PC-3 (cell line): ENCODE measurements at regions of chr17 and their contacts with region 1.

Region 1: DNA sequence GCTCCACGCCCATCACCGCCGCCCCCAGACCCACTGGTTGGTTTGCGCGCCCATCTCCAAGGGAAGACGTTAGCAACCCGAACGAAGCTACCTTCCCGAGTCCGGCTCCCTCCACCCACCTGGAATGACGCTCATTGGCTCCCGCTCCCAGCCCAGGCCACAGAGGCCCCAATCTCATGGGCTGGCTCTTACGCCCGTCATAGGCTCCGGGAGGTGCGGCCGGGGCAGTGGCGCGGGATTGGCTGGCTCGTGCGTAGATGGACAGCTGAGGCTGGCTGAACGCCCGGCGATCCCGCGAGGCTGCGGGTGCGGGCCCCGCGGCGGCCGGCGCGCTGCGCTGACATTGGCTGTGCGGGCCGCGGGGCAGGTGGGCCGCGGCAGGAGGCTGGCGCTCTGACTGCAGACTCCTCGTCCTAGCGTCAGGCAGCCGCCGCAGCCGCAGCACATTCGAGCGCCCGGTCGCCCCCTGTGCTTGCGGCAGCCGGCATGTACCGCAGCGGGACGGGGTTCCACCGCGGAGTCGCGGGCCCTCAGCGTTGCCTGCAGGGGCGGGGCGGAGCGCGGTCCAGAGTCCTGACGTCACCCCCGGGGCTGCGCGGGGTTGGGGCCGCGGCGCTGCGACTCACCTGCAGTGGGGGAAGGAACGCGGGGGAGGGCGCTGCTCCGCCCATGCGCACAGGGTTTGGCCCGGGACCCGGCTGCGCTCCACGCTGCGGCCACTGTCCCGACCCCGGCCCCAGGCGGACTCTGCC is 453 bp upstream of the MYH10 start:
- DNase-seq: peak; percentile 97
- ATAC-seq: peak; percentile 96
- H3K4me3 ChIP-seq: peak overlapping the region; percentile 91
- H3K27ac ChIP-seq: peak overlapping the region; percentile 54
- H3K4me1 ChIP-seq: peaks cover 11% of the 10 kb centered on the region
- H3K27me3 ChIP-seq: no peaks in the 10 kb centered on the region
- CTCF ChIP-seq: 0 out of 2 replicates have a peak, but pooled peaks have one; percentile 7

Region 2: DNA sequence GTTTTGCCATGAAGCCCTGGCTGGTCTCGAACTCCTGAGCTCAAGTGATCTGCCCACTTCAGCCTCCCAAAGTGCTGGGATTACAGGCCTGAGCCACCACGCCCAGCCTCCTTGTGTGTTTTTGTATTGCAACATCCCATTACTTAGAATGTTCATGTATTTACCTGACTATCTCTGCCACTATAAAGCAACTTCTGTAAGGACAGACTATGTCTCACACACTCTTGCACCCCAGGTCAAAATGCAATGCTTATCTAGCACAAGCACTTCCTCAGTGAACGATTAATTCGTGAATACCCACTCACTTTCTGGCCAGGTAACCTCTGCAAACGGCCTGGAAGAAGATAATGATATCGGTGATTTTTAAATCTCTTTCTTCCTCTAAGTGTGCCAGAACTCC is 112.7 kb before region 1 on chr17:
- CTCF ChIA-PET with region 1: no interaction called
- POLR2A ChIA-PET with region 1: interaction called, 11 read pairs
- intact Hi-C with region 1: no loop called
- DNase-seq: no peak
- ATAC-seq: no peak
- H3K4me3 ChIP-seq: no peak overlapping the region
- H3K27ac ChIP-seq: no peak overlapping the region
- H3K4me1 ChIP-seq: no peaks in the 10 kb centered on the region
- H3K27me3 ChIP-seq: no peaks in the 10 kb centered on the region
- CTCF ChIP-seq: no peak

Region 3: DNA sequence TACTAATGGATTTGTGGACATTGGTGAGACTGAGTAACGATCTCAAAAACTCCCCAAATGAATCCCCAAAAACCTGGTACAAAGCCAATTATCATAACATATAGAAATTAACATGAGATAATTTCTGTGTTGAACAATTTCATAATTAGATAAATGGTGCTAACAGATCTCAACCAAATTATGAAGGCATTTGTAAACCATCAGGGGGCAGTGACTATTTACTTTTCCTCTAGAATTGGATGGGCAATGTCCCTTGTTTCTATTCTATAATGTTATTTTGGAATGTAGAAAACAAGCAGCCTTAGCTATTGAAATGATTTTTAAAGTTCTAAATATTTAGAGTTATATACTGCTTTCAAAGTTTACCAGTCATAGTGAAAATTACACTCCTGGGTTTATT is 58.2 kb before region 1 on chr17:
- CTCF ChIA-PET with region 1: interaction called, 3 read pairs
- POLR2A ChIA-PET with region 1: no interaction called
- intact Hi-C with region 1: loop called (anchors 10 kb)
- DNase-seq: no peak
- ATAC-seq: no peak
- H3K4me3 ChIP-seq: no peak overlapping the region
- H3K27ac ChIP-seq: no peak overlapping the region
- H3K4me1 ChIP-seq: no peaks in the 10 kb centered on the region
- H3K27me3 ChIP-seq: no peaks in the 10 kb centered on the region
- CTCF ChIP-seq: peak; percentile 48

Region 4: GRCh38 chr17:8602679-8603078 is 28.3 kb before region 1 on chr17:
- CTCF ChIA-PET with region 1: interaction called, 3 read pairs
- POLR2A ChIA-PET with region 1: no interaction called
- intact Hi-C with region 1: loop called (anchors 2 kb)
- DNase-seq: peak; percentile 45
- ATAC-seq: peak; percentile 90
- H3K4me3 ChIP-seq: no peak overlapping the region
- H3K27ac ChIP-seq: no peak overlapping the region
- H3K4me1 ChIP-seq: peaks cover 11% of the 10 kb centered on the region
- H3K27me3 ChIP-seq: no peaks in the 10 kb centered on the region
- CTCF ChIP-seq: no peak

Region 5: GRCh38 chr17:8745586-8746500 is 114.9 kb after region 1 on chr17:
- CTCF ChIA-PET with region 1: interaction called, 11 read pairs
- POLR2A ChIA-PET with region 1: no interaction called
- intact Hi-C with region 1: no loop called
- DNase-seq: peak; percentile 38
- ATAC-seq: peak; percentile 90
- H3K4me3 ChIP-seq: peak overlapping the region; percentile 68
- H3K27ac ChIP-seq: no peak overlapping the region
- H3K4me1 ChIP-seq: no peaks in the 10 kb centered on the region
- H3K27me3 ChIP-seq: no peaks in the 10 kb centered on the region
- CTCF ChIP-seq: peak; percentile 65